ENCODE measurements at regions of chr1 and their contacts with region 1.

Region 1: GRCh38 chr1:42766741-42767509 is at the starts of genes C1orf50 and P3H1:
- DNase-seq: peak; percentile 100
- H3K4me3 Mint-ChIP-seq: no peak within 1 kb of the TSS
- H3K27ac Mint-ChIP-seq: peak within 1 kb of the TSS; percentile 93
- H3K4me1 Mint-ChIP-seq: peaks cover 25% of the 10 kb centered on the region
- H3K27me3 Mint-ChIP-seq: no peaks in the 10 kb centered on the region
- total RNA-seq, gene C1orf50: 6.2 and 6.3 TPM in 2 replicates
- total RNA-seq, gene P3H1: 47.4 and 51.1 TPM in 2 replicates

Region 2: GRCh38 chr1:42335050-42335808 is 431.7 kb before region 1 on chr1 and contains the start of gene FOXJ3:
- intact Hi-C with region 1: loop called (anchors 5 kb)
- DNase-seq: peak; percentile 97
- H3K4me3 Mint-ChIP-seq: peak within 1 kb of the TSS; percentile 91
- H3K27ac Mint-ChIP-seq: peak within 1 kb of the TSS; percentile 89
- H3K4me1 Mint-ChIP-seq: peaks cover 34% of the 10 kb centered on the region
- H3K27me3 Mint-ChIP-seq: no peaks in the 10 kb centered on the region
- total RNA-seq, gene FOXJ3: 48.9 and 51.0 TPM in 2 replicates

Region 3: DNA sequence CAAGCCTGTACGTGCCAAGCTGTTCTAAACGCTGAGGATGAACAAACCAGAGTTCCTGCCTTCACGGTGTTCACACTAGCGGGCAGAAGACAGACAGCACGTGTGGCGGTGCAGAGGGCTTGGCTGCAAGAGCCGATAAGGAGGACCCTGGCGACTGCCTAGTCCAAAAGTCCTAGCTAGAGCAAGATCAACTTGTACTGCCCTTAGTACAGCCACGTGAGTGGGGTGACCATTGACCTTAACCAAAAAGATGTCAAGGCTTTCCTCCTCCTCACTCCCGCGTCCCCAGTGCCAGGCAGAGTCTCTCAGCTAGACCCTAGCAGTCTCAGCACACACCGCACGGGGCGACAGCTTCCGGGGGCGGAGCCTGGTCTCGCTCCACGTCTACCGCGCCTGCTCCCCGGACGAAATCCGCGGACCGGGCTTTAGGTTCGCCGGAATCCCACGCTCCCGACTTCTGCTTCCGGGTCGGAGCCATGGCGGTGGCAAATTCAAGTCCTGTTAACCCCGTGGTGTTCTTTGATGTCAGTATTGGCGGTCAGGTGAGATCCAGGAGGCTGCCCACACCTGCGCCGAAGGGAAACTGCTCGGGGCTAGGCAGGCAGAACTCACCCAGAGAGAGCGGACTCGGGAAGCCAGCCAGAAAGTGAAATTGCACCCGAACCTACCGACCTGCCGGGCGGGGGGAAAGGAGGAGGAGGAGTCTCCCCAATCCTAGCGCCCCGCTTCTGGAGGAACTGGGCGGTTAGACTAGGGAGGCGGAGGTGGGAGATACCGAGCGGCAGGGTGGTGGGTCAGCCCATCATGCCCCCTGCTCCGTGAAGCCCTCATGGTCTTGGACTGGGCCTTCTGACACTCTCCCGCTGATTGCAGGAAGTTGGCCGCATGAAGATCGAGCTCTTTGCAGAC is 108.7 kb before region 1 on chr1 and contains the start of gene PPIH:
- intact Hi-C with region 1: loop called (anchors 1 kb)
- DNase-seq: peak; percentile 99
- H3K4me3 Mint-ChIP-seq: peak within 1 kb of the TSS; percentile 97
- H3K27ac Mint-ChIP-seq: peak within 1 kb of the TSS; percentile 98
- H3K4me1 Mint-ChIP-seq: peaks cover 34% of the 10 kb centered on the region
- H3K27me3 Mint-ChIP-seq: peaks cover 4% of the 10 kb centered on the region
- total RNA-seq, gene PPIH: 88.4 and 92.9 TPM in 2 replicates

Region 4: DNA sequence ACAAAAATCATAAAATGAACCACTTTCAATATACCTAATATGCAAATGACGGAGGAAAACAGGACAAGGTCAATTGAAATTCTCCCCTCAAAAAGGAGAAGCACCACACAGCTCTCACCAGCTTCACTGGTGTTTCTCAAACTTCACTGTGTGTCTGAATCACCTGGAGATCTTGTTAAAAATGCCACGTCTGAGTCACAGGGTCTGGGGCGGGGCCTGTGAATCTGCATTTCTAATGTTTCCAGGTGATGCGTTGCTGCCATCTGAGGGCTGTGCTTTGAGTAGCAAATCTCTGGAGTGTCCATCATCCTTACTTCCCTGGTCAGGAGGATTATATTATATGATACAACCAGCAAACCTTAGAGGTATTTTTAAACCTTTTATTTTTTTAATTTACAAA is 35.9 kb before region 1 on chr1:
- intact Hi-C with region 1: no loop called
- DNase-seq: peak; percentile 67
- H3K4me3 Mint-ChIP-seq: no peak overlapping the region
- H3K27ac Mint-ChIP-seq: no peak overlapping the region
- H3K4me1 Mint-ChIP-seq: peaks cover 2% of the 10 kb centered on the region
- H3K27me3 Mint-ChIP-seq: no peaks in the 10 kb centered on the region

Region 5: GRCh38 chr1:42793824-42794223 is 26.9 kb after region 1 on chr1:
- intact Hi-C with region 1: no loop called
- DNase-seq: no peak
- H3K4me3 Mint-ChIP-seq: no peak overlapping the region
- H3K27ac Mint-ChIP-seq: no peak overlapping the region
- H3K4me1 Mint-ChIP-seq: no peaks in the 10 kb centered on the region
- H3K27me3 Mint-ChIP-seq: peaks cover 12% of the 10 kb centered on the region

Region 6: GRCh38 chr1:42816585-42817434 is 49.9 kb after region 1 on chr1 and contains the starts of genes ERMAP and SVBP:
- intact Hi-C with region 1: loop called (anchors 1 kb)
- DNase-seq: peak; percentile 97
- H3K4me3 Mint-ChIP-seq: peak within 1 kb of the TSS; percentile 82
- H3K27ac Mint-ChIP-seq: peak within 1 kb of the TSS; percentile 83
- H3K4me1 Mint-ChIP-seq: peaks cover 17% of the 10 kb centered on the region
- H3K27me3 Mint-ChIP-seq: no peaks in the 10 kb centered on the region
- total RNA-seq, gene ERMAP: 3.5 and 3.8 TPM in 2 replicates
- total RNA-seq, gene SVBP: 7.3 and 10.0 TPM in 2 replicates

Region 7: GRCh38 chr1:42958488-42959319 is 191.8 kb after region 1 on chr1 and contains the start of gene SLC2A1:
- intact Hi-C with region 1: loop called (anchors 1 kb)
- DNase-seq: peak; percentile 98
- H3K4me3 Mint-ChIP-seq: peak within 1 kb of the TSS; percentile 97
- H3K27ac Mint-ChIP-seq: peak within 1 kb of the TSS; percentile 100
- H3K4me1 Mint-ChIP-seq: peaks cover 58% of the 10 kb centered on the region
- H3K27me3 Mint-ChIP-seq: peaks cover 6% of the 10 kb centered on the region
- total RNA-seq, gene SLC2A1: 135 and 144 TPM in 2 replicates

Measured in activated CD4-positive, alpha-beta T cell treated with anti-CD3 and anti-CD28 coated beads, Interleukin-2, amount 10 ng/mL, durations not matched to agents 24 days and 14 days (primary cell).